WTC11 (cell line): ENCODE measurements at regions of chr13 and their contacts with region 1.

Region 1: DNA sequence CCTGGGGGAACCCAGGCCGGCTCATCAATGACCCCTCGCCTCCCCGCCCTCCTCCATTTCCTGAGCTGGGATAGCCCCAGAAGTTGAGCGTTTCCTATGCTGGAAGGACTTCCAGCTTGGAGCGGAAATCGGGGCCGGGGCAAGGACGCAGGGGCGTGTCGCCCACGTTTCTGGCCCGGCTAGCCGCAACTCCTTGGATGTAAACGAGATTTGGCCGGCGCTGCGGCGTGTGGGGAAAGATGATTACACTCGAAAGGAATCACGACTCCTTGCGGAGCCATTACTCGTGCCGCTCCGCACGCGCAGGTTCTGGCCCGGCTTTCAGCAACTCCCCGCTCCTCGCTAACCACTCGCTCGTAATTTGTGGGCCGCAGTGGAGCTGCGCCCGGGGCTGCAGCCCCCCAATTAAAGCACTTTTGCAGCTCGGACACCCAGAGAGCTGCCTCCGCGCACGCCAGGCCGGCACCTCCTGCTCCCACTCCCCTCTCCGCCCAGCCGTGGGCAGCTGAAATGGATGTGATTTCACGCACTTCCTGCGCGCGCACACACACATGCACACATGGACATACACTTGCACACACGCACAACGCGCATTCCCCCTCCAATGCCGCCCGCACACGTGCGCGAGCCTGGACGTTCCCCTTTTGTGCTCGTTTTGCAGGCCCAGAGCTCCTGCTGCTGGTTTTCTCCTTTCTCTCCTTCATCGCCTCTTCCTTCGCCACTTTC is 15.7 kb downstream of the ZIC5 start:
- DNase-seq: peak; percentile 57
- ATAC-seq: peak; percentile 1; the same call in 1 of the 2 replicates
- H3K4me3 Mint-ChIP-seq: peak overlapping the region; percentile 87
- H3K27ac Mint-ChIP-seq: no peak overlapping the region
- H3K4me1 Mint-ChIP-seq: peaks cover 57% of the 10 kb centered on the region
- H3K27me3 Mint-ChIP-seq: peaks cover 69% of the 10 kb centered on the region
- CTCF ChIP-seq: no peak

Region 2: GRCh38 chr13:99590519-99591011 is 365.3 kb before region 1 on chr13:
- CTCF ChIA-PET with region 1: no interaction called
- POLR2A ChIA-PET with region 1: no interaction called
- DNase-seq: no peak
- ATAC-seq: no peak
- H3K4me3 Mint-ChIP-seq: no peak overlapping the region
- H3K27ac Mint-ChIP-seq: no peak overlapping the region; the same call in 1 of the 2 replicates
- H3K4me1 Mint-ChIP-seq: no peaks in the 10 kb centered on the region
- H3K27me3 Mint-ChIP-seq: peaks cover 3% of the 10 kb centered on the region; the same call in 1 of the 2 replicates
- CTCF ChIP-seq: no peak

Region 3: GRCh38 chr13:99766641-99767045 is 189.3 kb before region 1 on chr13:
- CTCF ChIA-PET with region 1: interaction called, 23 read pairs
- POLR2A ChIA-PET with region 1: no interaction called
- DNase-seq: peak; percentile 22
- ATAC-seq: peak; percentile 90
- H3K4me3 Mint-ChIP-seq: no peak overlapping the region
- H3K27ac Mint-ChIP-seq: peak overlapping the region; percentile 80
- H3K4me1 Mint-ChIP-seq: peaks cover 31% of the 10 kb centered on the region
- H3K27me3 Mint-ChIP-seq: no peaks in the 10 kb centered on the region; the same call in 1 of the 2 replicates
- CTCF ChIP-seq: 0 out of 2 replicates have a peak, but pooled peaks have one; percentile 21

Region 4: GRCh38 chr13:99871249-99871898 is 84.5 kb before region 1 on chr13:
- CTCF ChIA-PET with region 1: no interaction called
- POLR2A ChIA-PET with region 1: no interaction called
- DNase-seq: no peak
- ATAC-seq: no peak
- H3K4me3 Mint-ChIP-seq: no peak overlapping the region
- H3K27ac Mint-ChIP-seq: no peak overlapping the region
- H3K4me1 Mint-ChIP-seq: peaks cover 49% of the 10 kb centered on the region
- H3K27me3 Mint-ChIP-seq: no peaks in the 10 kb centered on the region
- CTCF ChIP-seq: no peak

Region 5: DNA sequence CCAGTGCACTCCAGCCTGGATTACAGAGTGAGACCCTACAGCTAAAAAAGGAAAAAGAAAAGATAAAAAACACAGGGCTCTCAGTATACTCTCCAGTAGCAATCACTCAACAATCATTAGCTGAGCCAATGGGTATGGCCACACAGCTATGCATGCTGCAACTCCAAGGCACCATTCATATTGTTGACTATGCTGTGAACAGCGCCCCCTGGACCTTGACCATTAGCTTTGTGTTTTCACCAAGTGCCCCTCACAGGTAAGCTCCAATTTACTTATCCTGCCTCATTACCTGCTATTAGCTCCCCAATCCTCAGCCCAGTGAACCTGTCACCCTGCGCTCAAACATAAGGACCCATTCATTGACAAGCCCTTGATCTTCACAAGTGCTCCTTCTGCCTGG is 20.1 kb before region 1 on chr13:
- CTCF ChIA-PET with region 1: interaction called, 18 read pairs
- POLR2A ChIA-PET with region 1: no interaction called
- DNase-seq: peak; percentile 56
- ATAC-seq: peak; percentile 60
- H3K4me3 Mint-ChIP-seq: no peak overlapping the region
- H3K27ac Mint-ChIP-seq: no peak overlapping the region
- H3K4me1 Mint-ChIP-seq: peaks cover 10% of the 10 kb centered on the region
- H3K27me3 Mint-ChIP-seq: no peaks in the 10 kb centered on the region; the same call in 1 of the 2 replicates
- CTCF ChIP-seq: peak; percentile 25; the same call in 1 of the 2 replicates

Region 6: GRCh38 chr13:99969919-99970621 is 14.2 kb after region 1 on chr13:
- CTCF ChIA-PET with region 1: interaction called, 12 read pairs
- POLR2A ChIA-PET with region 1: interaction called, 11 read pairs
- DNase-seq: peak; percentile 81
- ATAC-seq: peak; percentile 19
- H3K4me3 Mint-ChIP-seq: peak overlapping the region; percentile 91
- H3K27ac Mint-ChIP-seq: peak overlapping the region; percentile 85
- H3K4me1 Mint-ChIP-seq: peaks cover 57% of the 10 kb centered on the region
- H3K27me3 Mint-ChIP-seq: no peaks in the 10 kb centered on the region; the same call in 1 of the 2 replicates
- CTCF ChIP-seq: no peak

Region 7: DNA sequence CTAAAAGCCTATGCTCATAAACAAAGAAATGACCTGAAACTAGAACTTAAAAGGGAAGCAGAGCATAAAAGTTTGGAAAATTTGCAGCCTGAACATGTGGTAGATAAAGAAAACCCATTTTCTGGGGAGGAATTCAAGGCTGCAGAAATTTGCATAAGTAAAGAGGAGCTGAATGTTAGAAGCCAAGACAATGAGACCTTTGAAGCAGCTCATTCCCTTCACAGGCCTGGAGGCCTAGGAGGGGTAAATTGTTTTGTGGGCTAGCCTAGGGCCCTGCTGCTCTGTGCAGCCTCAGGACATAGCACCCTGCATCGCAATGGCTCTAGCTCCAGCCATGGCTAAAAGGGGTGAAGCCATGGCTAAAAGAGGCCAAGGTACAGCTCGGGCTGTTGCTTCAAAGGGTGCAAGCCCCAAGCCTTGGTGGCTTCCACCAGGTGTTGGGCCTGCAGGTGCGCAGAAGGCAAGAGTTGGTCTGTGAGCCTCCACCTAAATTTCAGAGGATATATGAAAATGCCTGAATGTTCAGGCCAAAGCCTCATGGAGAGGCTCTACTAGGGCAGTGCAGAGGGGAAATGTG is 64.0 kb after region 1 on chr13:
- CTCF ChIA-PET with region 1: no interaction called
- POLR2A ChIA-PET with region 1: no interaction called
- DNase-seq: no peak
- ATAC-seq: peak; percentile 94
- H3K4me3 Mint-ChIP-seq: no peak overlapping the region
- H3K27ac Mint-ChIP-seq: no peak overlapping the region
- H3K4me1 Mint-ChIP-seq: peaks cover 23% of the 10 kb centered on the region
- H3K27me3 Mint-ChIP-seq: no peaks in the 10 kb centered on the region
- CTCF ChIP-seq: no peak